WTC11 (cell line): ENCODE measurements at regions of chr1 and their contacts with region 1.

Region 1: GRCh38 chr1:33127001-33127791 is 46.2 kb downstream of the AZIN2 start:
- DNase-seq: peak; percentile 95
- ATAC-seq: peak; percentile 97
- H3K4me3 Mint-ChIP-seq: peak overlapping the region; percentile 79
- H3K27ac Mint-ChIP-seq: peak overlapping the region; percentile 28
- H3K4me1 Mint-ChIP-seq: peaks cover 19% of the 10 kb centered on the region
- H3K27me3 Mint-ChIP-seq: peaks cover 36% of the 10 kb centered on the region
- CTCF ChIP-seq: peak; percentile 66

Region 2: DNA sequence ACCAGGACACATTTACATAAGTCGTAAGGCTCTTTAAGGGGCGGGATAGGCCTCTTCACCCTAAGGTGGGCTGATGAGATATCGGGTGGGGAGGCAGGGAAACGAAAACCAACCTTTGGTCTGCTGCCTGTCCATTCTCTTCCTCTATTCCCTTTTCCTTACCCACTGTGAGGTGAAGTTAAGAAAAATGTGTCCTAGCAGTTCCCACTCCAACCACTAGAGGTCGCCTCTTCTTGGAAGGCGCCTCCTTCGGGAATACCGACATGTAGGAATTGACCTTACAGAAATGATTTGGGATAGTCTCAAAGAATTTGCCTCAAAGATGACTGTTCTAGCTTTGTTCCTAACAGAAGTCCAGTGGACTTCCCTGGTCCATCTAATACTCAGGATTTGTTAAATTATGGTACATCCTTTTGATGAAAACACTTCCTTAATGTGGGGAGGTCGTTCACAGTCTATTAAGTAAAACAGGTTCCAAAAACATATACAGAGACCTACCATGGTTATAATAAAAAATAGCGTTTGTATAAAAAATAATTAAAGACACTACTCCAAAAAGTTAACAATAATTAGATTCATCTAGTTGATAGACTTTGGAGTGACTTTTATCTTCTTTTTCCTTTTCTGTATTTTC is 32.1 kb before region 1 on chr1:
- CTCF ChIA-PET with region 1: interaction called, 12 read pairs
- POLR2A ChIA-PET with region 1: no interaction called
- DNase-seq: peak; percentile 82
- ATAC-seq: peak; percentile 38
- H3K4me3 Mint-ChIP-seq: no peak overlapping the region
- H3K27ac Mint-ChIP-seq: no peak overlapping the region
- H3K4me1 Mint-ChIP-seq: peaks cover 16% of the 10 kb centered on the region
- H3K27me3 Mint-ChIP-seq: peaks cover 21% of the 10 kb centered on the region
- CTCF ChIP-seq: peak; percentile 97

Region 3: DNA sequence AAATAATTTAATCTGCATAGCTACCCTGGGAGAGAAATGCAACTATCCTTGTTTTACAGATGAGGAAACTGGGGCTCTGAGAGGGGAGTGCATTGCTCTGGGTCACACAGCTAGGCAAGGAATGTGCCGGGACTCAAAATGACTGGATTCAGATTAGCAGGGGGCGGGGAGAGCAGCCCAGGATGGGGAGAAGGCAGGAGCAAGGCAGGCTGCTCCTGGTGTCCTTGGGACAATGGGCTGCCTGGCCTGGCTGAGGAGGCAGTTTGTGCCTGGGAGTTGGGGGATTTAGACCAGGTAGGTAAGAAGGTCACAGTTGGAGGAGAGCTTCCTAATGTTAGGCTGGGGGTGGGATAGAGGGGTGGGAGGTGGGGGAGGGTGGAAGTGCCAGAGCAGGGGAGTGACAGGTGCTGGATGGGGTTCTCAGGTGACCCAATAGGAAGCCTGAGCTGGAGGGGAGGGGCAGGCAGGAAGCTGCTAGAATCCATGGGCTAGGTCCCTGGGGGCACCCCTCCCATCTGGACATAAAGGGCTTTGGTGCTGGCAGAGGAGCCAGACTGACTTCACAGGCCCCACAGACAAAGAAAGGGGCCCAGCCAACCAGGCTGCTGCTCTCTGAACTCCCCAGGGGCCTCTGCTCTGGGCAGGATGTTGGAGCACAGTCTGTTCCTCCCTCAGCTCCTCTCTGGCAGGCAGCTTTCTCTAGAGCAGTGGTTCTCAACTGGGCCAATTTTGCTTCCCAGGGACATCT is 25.7 kb after region 1 on chr1:
- CTCF ChIA-PET with region 1: interaction called, 11 read pairs
- POLR2A ChIA-PET with region 1: no interaction called
- DNase-seq: peak; percentile 78
- ATAC-seq: peak; percentile 87
- H3K4me3 Mint-ChIP-seq: peak overlapping the region; percentile 7; the same call in 1 of the 2 replicates
- H3K27ac Mint-ChIP-seq: peak overlapping the region; percentile 93
- H3K4me1 Mint-ChIP-seq: peaks cover 47% of the 10 kb centered on the region
- H3K27me3 Mint-ChIP-seq: no peaks in the 10 kb centered on the region; the same call in 1 of the 2 replicates
- CTCF ChIP-seq: no peak